ENCODE measurements at regions of chr10 and their contacts with region 1.

Region 1: DNA sequence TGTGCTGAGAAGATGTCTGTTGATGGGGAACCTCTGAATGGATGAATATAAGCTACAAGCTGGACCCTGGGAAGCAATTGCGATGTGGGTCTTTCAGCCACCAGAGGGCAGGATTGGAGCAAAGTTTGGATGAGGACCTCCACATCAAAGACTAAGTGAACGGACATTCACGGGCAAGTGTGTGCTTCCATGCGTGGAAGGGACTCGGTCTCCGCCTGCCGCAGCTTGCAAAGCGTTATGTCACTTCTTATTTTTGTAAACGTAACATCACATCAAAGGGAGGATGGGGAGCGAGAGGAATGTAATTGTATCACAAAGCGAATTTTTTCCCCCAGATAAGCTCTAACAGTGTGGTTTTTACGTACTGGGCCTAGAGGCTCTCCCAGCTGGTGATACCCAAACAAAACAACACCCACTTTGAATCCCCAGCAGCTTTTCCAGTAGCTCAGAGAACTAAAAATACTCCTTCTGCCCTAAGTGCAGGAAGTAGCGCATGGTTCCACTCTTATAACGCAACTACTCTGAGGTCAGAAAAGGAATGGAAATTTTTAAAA is 65.0 kb downstream of the VWA2 start:
- DNase-seq: peak; percentile 84 to 85
- H3K4me3 ChIP-seq: peak overlapping the region; percentile 46
- H3K4me3 Mint-ChIP-seq: peak overlapping the region; percentile 68
- H3K27ac Mint-ChIP-seq: peak overlapping the region; percentile 30
- H3K4me1 ChIP-seq: peaks cover 4% of the 10 kb centered on the region; the same call in 1 of the 2 replicates
- H3K4me1 Mint-ChIP-seq: peaks cover 10% of the 10 kb centered on the region
- H3K27me3 ChIP-seq: no peaks in the 10 kb centered on the region
- H3K27me3 Mint-ChIP-seq: no peaks in the 10 kb centered on the region
- CTCF ChIP-seq: peak; percentile 80 to 81

Region 2: DNA sequence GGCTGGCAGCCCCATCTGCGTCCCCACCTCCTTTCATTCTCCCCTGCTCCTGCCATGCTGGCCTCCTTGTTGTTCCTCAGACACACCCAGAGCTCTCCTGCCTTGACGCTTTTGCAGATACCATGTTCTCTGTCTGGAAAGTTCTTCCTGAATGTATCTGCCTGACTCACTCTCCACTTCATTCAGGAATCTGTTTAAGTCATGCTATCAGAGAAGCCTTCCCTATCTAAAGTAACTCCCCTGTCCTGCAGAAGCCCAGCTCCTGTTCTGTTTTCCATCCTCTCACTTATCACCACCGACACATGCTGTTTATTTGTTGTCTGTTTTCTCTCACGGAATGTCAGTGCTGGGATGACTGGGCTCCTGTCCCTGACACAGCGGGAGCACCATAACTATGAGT is 18.2 kb after region 1 on chr10:
- CTCF ChIA-PET with region 1: interaction called, 11 read pairs
- POLR2A ChIA-PET with region 1: no interaction called
- intact Hi-C with region 1: no loop called
- DNase-seq: no peak
- H3K4me3 ChIP-seq: no peak overlapping the region
- H3K4me3 Mint-ChIP-seq: no peak overlapping the region
- H3K27ac Mint-ChIP-seq: no peak overlapping the region
- H3K4me1 ChIP-seq: peaks cover 26% of the 10 kb centered on the region
- H3K4me1 Mint-ChIP-seq: peaks cover 31% of the 10 kb centered on the region
- H3K27me3 ChIP-seq: no peaks in the 10 kb centered on the region
- H3K27me3 Mint-ChIP-seq: no peaks in the 10 kb centered on the region
- CTCF ChIP-seq: no peak

Region 3: DNA sequence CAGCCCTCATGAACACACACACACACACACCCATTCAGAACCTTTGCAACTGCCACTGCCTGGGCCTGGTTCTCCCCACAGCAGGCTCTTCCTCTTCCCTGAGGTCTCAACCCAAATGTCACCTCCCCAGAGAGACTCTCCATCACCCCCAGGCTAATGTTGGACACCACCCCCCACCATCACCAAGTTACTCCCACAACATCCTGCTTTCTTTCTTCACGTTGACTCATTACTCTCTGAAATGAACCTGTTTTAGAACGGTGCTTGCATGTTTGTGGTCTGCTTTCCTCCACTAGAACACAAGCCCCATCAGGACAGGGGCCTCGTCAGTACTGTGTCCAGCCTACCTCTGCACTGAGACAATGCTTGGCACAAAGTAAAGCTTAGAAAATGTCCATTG is 84.2 kb after region 1 on chr10:
- CTCF ChIA-PET with region 1: interaction called, 35 read pairs
- POLR2A ChIA-PET with region 1: no interaction called
- intact Hi-C with region 1: loop called (anchors 1 kb)
- DNase-seq: no peak
- H3K4me3 ChIP-seq: no peak overlapping the region
- H3K4me3 Mint-ChIP-seq: no peak overlapping the region
- H3K27ac Mint-ChIP-seq: no peak overlapping the region
- H3K4me1 ChIP-seq: no peaks in the 10 kb centered on the region
- H3K4me1 Mint-ChIP-seq: no peaks in the 10 kb centered on the region
- H3K27me3 ChIP-seq: no peaks in the 10 kb centered on the region
- H3K27me3 Mint-ChIP-seq: no peaks in the 10 kb centered on the region
- CTCF ChIP-seq: no peak

Region 4: GRCh38 chr10:114403541-114404161 is 99.6 kb after region 1 on chr10:
- CTCF ChIA-PET with region 1: interaction called, 47 read pairs
- POLR2A ChIA-PET with region 1: interaction called, 3 read pairs
- intact Hi-C with region 1: loop called (anchors 1 kb)
- DNase-seq: peak in 1 of 2 experiments; percentile 38
- H3K4me3 ChIP-seq: peak overlapping the region; percentile 64
- H3K4me3 Mint-ChIP-seq: peak overlapping the region; percentile 74
- H3K27ac Mint-ChIP-seq: no peak overlapping the region
- H3K4me1 ChIP-seq: peaks cover 13% of the 10 kb centered on the region; the same call in 1 of the 2 replicates
- H3K4me1 Mint-ChIP-seq: peaks cover 10% of the 10 kb centered on the region
- H3K27me3 ChIP-seq: peaks cover 3% of the 10 kb centered on the region
- H3K27me3 Mint-ChIP-seq: peaks cover 10% of the 10 kb centered on the region
- CTCF ChIP-seq: peak in 1 of 2 experiments; percentile 63

Region 5: DNA sequence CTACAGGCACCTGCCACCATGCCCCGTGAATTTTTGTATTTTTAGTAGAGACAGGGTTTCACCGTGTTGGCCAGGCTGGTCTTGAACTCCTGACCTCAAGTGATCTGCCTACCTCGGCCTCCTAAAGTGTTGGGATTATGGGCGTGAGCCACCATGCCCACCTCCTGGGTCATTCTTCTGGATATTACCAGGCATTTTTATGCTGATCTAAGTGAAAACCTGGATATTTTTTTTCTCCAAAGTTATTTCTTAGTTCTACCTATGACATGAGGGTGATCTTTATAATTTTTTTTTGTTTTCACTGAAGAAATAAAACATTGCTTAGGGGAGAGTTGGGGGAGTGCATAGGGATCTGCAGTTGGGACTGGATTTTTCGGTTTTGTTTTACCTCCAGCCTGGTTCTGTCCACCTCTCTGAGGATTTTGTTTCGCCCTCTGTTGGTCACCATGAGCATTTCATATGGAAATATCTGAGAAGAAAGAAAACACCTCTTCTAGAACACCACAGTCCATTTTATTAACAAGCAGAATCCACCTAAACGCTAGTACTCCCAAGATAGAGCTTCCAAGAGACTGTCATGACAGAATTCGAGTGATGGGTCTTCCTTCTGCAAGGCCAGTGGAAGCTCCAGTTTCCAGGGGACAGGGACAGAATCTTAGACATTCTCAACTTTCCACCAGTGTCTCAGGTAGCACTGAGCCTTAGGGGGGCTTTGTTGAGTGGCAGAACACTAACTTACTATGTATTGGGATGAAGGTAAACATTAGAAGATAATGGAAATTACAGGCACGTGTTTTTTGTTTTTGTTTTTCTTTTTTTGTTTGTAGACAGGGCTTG is 133.6 kb after region 1 on chr10:
- CTCF ChIA-PET with region 1: interaction called, 28 read pairs
- POLR2A ChIA-PET with region 1: no interaction called
- intact Hi-C with region 1: loop called (anchors 1 kb)
- DNase-seq: peak in 1 of 2 experiments; percentile 15
- H3K4me3 ChIP-seq: no peak overlapping the region
- H3K4me3 Mint-ChIP-seq: no peak overlapping the region
- H3K27ac Mint-ChIP-seq: no peak overlapping the region
- H3K4me1 ChIP-seq: peaks cover 6% of the 10 kb centered on the region; the same call in 1 of the 2 replicates
- H3K4me1 Mint-ChIP-seq: no peaks in the 10 kb centered on the region
- H3K27me3 ChIP-seq: no peaks in the 10 kb centered on the region
- H3K27me3 Mint-ChIP-seq: no peaks in the 10 kb centered on the region
- CTCF ChIP-seq: peak; percentile 54 to 60

Region 6: DNA sequence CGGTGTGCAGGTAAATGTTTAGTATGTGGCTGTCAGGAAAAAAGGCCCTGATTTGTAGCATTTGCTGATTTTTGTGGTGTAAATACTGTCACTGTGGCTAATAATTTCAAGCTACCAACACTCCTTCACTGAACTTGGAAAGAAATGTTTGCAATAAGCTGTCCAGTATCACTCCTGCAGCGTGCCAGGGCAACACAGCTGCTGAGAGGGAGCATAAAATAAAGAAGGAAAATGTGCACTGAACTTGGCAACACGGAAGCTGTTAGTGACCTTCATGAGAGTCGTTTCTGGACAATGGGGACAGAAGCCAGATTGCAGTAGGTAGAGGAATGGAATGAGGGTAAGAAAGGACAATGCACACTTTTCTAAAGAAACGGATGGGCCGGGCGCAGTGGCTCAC is 479.6 kb after region 1 on chr10:
- CTCF ChIA-PET with region 1: interaction called, 5 read pairs
- POLR2A ChIA-PET with region 1: no interaction called
- intact Hi-C with region 1: loop called (anchors 1 kb)
- DNase-seq: no peak
- H3K4me3 ChIP-seq: no peak overlapping the region
- H3K4me3 Mint-ChIP-seq: no peak overlapping the region
- H3K27ac Mint-ChIP-seq: no peak overlapping the region
- H3K4me1 ChIP-seq: no peaks in the 10 kb centered on the region
- H3K4me1 Mint-ChIP-seq: no peaks in the 10 kb centered on the region
- H3K27me3 ChIP-seq: no peaks in the 10 kb centered on the region
- H3K27me3 Mint-ChIP-seq: peaks cover 2% of the 10 kb centered on the region
- CTCF ChIP-seq: no peak

Measured in Caco-2 (cell line).